Activated CD4-positive, alpha-beta T cell treated with anti-CD3 and anti-CD28 coated beads for 36 hours (primary cell): ENCODE measurements at regions of chr6 and their contacts with region 1.

Region 1: DNA sequence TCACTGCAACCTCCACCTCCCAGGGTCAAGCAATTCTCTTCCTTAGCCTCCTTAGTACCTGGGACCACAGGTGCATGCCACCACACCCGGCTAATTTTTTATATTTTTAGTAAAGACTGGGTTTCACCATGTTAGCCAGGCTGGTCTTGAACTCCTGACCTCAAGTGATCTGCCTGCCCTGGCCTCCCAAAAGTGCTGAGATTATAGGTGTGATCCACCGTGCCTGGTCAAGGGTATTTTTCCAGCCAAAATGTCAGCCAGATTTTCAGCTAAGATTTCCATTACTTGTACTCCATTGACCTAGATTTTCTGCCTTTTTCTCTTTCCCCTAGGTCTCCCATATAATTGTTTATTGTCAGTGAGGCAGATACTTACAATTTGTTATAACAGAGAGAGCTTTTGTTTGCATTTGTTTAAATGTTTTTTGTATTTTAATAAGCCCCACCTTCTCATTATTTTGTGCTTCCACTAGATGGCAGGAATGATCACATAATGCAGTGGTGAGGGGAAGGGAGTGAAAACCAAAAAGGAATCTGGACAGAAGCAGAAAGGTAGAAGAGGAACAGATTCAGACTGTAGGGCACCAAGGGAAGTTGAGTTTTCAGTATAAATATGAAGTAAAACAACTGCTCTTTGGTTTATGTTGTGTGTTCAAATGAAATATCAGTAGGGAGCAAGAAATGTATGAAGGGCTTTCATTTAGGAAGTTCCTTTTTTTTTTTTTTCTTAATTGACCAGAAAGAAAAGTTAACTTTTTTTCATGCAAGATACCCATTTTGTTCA is 29.7 kb downstream of the RPF2 start:
- DNase-seq: no peak
- ATAC-seq: peak; percentile 73
- H3K4me3 Mint-ChIP-seq: no peak overlapping the region
- H3K27ac Mint-ChIP-seq: no peak overlapping the region
- H3K4me1 Mint-ChIP-seq: peaks cover 4% of the 10 kb centered on the region
- H3K27me3 Mint-ChIP-seq: no peaks in the 10 kb centered on the region

Region 2: GRCh38 chr6:109743739-109744138 is 1267.8 kb before region 1 on chr6:
- CTCF ChIA-PET with region 1: no interaction called
- POLR2A ChIA-PET with region 1: no interaction called
- intact Hi-C with region 1: no loop called
- DNase-seq: no peak
- ATAC-seq: no peak
- H3K4me3 Mint-ChIP-seq: no peak overlapping the region
- H3K27ac Mint-ChIP-seq: no peak overlapping the region
- H3K4me1 Mint-ChIP-seq: peaks cover 5% of the 10 kb centered on the region
- H3K27me3 Mint-ChIP-seq: no peaks in the 10 kb centered on the region

Region 3: DNA sequence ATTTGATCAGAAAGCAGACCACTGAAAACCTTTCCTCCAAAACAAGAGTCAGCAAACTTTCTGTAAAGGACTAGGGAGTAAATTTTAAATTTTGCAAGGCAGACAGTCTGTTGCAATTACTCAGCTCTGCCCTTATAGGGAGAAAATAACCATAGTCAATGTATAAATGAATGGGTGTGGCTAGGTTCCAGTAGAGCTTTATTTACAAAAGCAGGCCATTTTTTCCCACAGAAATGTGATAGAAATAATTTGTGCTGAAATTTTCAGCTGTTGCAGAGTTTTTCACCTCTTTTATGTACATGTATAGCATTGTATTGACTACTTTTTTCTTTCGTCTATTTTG is 129.3 kb before region 1 on chr6:
- CTCF ChIA-PET with region 1: no interaction called
- POLR2A ChIA-PET with region 1: no interaction called
- intact Hi-C with region 1: no loop called
- DNase-seq: no peak
- ATAC-seq: no peak
- H3K4me3 Mint-ChIP-seq: no peak overlapping the region
- H3K27ac Mint-ChIP-seq: peak overlapping the region; percentile 56
- H3K4me1 Mint-ChIP-seq: peaks cover 89% of the 10 kb centered on the region
- H3K27me3 Mint-ChIP-seq: no peaks in the 10 kb centered on the region

Region 4: DNA sequence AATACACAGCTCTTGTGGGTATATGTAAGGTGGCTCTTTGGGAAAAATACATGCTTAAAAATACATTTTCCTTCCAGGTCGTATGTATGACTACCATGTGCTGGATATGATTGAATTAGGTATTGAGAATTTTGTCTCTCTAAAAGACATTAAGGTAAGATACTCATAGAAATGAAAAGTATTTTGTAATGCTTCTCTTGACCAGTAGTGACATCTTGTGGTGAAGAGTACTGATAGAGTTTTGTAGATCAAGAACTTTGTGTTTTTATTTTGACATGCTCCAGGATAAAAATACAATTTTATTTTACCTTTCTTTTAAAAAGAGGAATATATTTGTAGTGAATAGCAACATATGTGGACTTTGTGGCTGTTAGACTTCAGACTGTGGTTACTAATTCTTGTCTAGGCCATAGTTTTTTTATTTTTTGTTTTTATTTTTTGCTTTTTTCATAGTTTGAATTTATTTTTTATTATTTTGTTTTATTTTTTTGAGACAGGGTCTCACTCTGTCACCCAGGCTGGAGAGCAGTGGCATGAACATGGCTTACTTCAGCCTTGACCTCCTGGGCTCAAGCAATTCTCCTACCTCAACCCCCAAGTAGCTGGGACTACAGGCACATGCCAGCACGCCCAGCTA is 11.8 kb before region 1 on chr6:
- CTCF ChIA-PET with region 1: interaction called, 19 read pairs
- POLR2A ChIA-PET with region 1: no interaction called
- intact Hi-C with region 1: no loop called
- DNase-seq: no peak
- ATAC-seq: no peak
- H3K4me3 Mint-ChIP-seq: no peak overlapping the region
- H3K27ac Mint-ChIP-seq: no peak overlapping the region
- H3K4me1 Mint-ChIP-seq: peaks cover 4% of the 10 kb centered on the region
- H3K27me3 Mint-ChIP-seq: no peaks in the 10 kb centered on the region

Region 5: DNA sequence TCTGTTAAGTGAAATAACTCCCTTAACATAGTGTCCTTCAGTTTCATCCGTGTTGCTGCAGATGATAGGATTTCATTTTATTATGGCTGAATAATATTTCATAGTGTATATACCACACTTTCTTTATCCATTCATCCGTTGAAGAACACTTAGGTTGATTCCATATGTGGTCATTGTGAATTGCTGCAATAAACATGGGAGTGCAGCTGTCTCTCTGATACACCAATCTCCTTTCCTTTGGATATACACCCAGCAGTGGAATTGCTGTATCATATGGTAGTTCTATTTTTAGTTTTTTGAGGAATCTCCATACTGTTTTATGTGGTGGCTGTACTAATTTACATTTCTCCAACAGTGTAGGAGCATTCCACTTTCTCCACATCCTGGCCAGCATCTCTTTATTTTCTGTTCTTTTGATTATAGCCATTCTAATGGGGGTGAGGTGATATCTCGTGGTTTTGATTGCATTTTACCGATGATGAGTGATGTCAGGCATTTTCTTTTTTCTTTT is 268.9 kb after region 1 on chr6:
- CTCF ChIA-PET with region 1: no interaction called
- POLR2A ChIA-PET with region 1: no interaction called
- intact Hi-C with region 1: no loop called
- DNase-seq: no peak
- ATAC-seq: no peak
- H3K4me3 Mint-ChIP-seq: no peak overlapping the region
- H3K27ac Mint-ChIP-seq: no peak overlapping the region
- H3K4me1 Mint-ChIP-seq: peaks cover 5% of the 10 kb centered on the region
- H3K27me3 Mint-ChIP-seq: no peaks in the 10 kb centered on the region